Calu3 (cell line): ENCODE measurements at regions of chr4 and their contacts with region 1.

Region 1: GRCh38 chr4:89836897-89837384 is at the start of gene SNCA:
- DNase-seq: peak; percentile 72
- H3K4me3 Mint-ChIP-seq: peak within 1 kb of the TSS; percentile 97
- H3K27ac Mint-ChIP-seq: peak within 1 kb of the TSS; percentile 85
- H3K4me1 Mint-ChIP-seq: peaks cover 6% of the 10 kb centered on the region
- H3K27me3 Mint-ChIP-seq: no peaks in the 10 kb centered on the region
- CTCF ChIP-seq: no peak
- total RNA-seq, gene SNCA: 27.6 and 36.8 TPM in 2 replicates

Region 2: DNA sequence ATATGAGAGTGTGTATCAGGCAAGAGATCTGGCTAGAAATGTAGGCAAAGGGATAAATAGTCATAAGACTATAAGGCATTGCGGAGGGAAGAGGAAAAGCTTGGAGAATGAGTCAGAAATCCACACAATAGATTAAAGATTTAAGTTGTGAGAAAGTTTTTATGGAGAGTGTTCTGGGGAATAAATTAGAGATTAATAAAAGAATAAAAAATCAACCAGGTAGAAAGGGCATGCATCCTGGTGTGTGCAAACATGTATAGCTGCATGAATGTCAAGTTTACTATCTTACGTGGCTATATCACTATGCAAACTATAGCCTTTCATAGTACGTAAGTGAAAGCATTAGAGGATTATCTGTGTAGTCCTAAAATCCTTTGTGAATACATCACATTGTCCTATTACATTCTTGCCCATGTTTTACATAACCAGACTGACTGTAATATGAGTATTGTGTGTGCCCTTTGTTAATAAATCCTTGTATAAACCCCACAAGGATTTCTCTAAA is 36.9 kb before region 1 on chr4:
- CTCF ChIA-PET with region 1: no interaction called
- intact Hi-C with region 1: loop called (anchors 5 kb)
- DNase-seq: peak; percentile 0
- H3K4me3 Mint-ChIP-seq: no peak overlapping the region
- H3K27ac Mint-ChIP-seq: no peak overlapping the region
- H3K4me1 Mint-ChIP-seq: peaks cover 19% of the 10 kb centered on the region
- H3K27me3 Mint-ChIP-seq: no peaks in the 10 kb centered on the region
- CTCF ChIP-seq: no peak

Region 3: DNA sequence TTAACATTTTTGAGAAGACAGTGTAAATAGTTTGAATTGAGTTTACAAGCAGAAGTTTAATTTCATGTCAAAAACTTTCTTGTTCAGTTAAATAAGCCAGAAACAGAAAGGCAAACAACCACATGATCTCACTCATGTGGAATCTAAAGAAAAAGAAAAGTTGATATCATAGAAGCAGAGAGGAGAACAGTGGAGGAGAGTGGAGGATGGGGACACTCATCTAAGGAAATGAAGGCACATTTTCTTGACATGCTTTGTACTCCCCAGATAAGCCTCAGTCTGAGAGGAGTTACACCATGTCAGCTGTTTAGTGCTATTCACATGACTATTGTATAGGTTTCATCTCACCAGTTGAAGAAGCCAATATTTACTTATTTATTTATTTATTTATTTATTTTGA is 13.5 kb before region 1 on chr4:
- CTCF ChIA-PET with region 1: no interaction called
- intact Hi-C with region 1: no loop called
- DNase-seq: no peak
- H3K4me3 Mint-ChIP-seq: no peak overlapping the region
- H3K27ac Mint-ChIP-seq: no peak overlapping the region
- H3K4me1 Mint-ChIP-seq: no peaks in the 10 kb centered on the region
- H3K27me3 Mint-ChIP-seq: no peaks in the 10 kb centered on the region
- CTCF ChIP-seq: no peak